HEK293 (cell line): ENCODE measurements at regions of chr2 and their contacts with region 1.

Region 1: DNA sequence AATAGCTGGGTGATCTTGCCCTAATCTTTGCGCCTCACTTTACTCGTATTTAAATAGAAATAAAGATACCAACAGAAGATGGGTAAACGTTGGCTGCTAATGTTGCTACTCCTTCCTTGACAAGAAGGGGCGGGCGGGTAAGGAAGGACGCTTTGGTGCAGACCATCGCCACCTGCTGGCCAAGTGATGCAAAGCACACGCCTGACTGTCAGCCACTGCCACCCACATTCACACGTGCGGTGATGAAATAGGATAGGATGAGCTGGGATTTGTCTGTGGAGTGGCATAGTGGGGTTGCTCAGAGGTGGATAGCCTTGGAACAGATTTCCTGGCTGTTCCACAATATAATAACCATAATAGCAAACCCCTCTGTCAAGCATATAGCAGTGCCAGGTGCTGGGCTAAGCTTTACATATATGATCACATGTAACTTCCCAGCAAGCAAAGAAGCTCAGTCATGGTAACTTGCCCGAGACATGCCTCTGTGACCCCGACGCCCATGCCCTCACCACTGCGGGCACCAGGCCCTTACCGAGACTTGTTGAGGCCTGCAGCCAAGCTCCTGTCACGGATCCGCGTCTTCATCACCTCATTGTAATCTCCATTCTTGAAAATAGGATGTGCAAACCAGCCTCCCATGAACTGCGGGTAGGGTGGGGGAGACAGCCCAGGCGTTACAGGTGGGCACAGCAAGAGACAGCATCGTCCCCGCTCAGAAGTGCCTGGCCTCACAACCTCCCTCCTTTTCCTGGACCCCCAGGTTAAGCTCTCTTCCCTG is 39.3 kb downstream of the LCT start:
- H3K4me3 ChIP-seq: no peak overlapping the region
- H3K27ac ChIP-seq: no peak overlapping the region
- H3K4me1 ChIP-seq: no peaks in the 10 kb centered on the region
- CTCF ChIP-seq: peak; percentile 74

Region 2: DNA sequence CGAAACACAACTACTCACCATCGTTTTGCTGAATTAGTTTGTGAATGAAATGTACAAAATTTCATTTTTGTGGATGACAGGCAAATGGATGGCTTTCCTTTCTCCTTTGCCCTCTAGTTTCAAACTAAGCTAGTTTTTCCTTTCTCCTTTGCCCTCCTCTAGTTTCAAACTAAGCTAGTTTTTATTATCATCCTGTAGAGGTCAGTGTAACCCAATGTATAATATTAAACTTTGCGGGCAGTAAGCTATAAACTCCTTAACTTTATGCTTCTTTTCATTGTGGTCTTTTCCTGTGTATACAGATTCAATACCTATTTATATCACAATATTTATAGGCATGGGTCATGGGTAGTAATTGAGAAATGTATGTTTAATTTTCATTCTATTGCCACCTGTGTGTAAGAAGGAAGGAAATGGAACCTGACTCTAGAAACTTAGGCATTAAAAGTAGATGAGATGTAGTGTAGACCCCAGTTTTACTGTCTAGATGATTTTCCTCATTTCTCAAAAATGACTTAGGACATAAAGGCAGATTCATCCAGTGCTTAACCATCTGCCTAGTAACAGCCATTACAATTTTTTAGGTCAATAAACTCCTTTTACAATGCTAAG is 808.6 kb before region 1 on chr2:
- CTCF ChIA-PET with region 1: interaction called, 13 read pairs
- POLR2A ChIA-PET with region 1: interaction called, 3 read pairs
- H3K4me3 ChIP-seq: no peak overlapping the region
- H3K27ac ChIP-seq: no peak overlapping the region
- H3K4me1 ChIP-seq: no peaks in the 10 kb centered on the region
- CTCF ChIP-seq: no peak; the same call in 1 of the 2 replicates

Region 3: GRCh38 chr2:135742325-135742757 is 55.3 kb before region 1 on chr2:
- CTCF ChIA-PET with region 1: interaction called, 10 read pairs
- POLR2A ChIA-PET with region 1: interaction called, 4 read pairs
- H3K4me3 ChIP-seq: peak overlapping the region; percentile 67
- H3K27ac ChIP-seq: peak overlapping the region; percentile 83
- H3K4me1 ChIP-seq: peaks cover 8% of the 10 kb centered on the region; the same call in 1 of the 2 replicates
- CTCF ChIP-seq: no peak; the same call in 1 of the 2 replicates

Region 4: GRCh38 chr2:135785032-135785431 is 12.7 kb before region 1 on chr2:
- CTCF ChIA-PET with region 1: interaction called, 47 read pairs
- POLR2A ChIA-PET with region 1: no interaction called
- H3K4me3 ChIP-seq: no peak overlapping the region
- H3K27ac ChIP-seq: no peak overlapping the region
- H3K4me1 ChIP-seq: no peaks in the 10 kb centered on the region
- CTCF ChIP-seq: no peak

Region 5: GRCh38 chr2:135825550-135826176 is 28.0 kb after region 1 on chr2:
- CTCF ChIA-PET with region 1: interaction called, 14 read pairs
- POLR2A ChIA-PET with region 1: no interaction called
- H3K4me3 ChIP-seq: no peak overlapping the region
- H3K27ac ChIP-seq: no peak overlapping the region
- H3K4me1 ChIP-seq: no peaks in the 10 kb centered on the region
- CTCF ChIP-seq: no peak